Activated CD4-positive, alpha-beta T cell treated with anti-CD3 and anti-CD28 coated beads for 36 hours (primary cell): ENCODE measurements at regions of chr19 and their contacts with region 1.

Region 1: GRCh38 chr19:50511068-50511822 is at the start of gene JOSD2:
- DNase-seq: peak; percentile 99
- ATAC-seq: peak; percentile 97
- H3K4me3 Mint-ChIP-seq: peak within 1 kb of the TSS; percentile 84
- H3K27ac Mint-ChIP-seq: peak within 1 kb of the TSS; percentile 92
- H3K4me1 Mint-ChIP-seq: peaks cover 14% of the 10 kb centered on the region
- H3K27me3 Mint-ChIP-seq: peaks cover 5% of the 10 kb centered on the region
- total RNA-seq, gene JOSD2: 17.4 to 28.1 TPM

Region 2: DNA sequence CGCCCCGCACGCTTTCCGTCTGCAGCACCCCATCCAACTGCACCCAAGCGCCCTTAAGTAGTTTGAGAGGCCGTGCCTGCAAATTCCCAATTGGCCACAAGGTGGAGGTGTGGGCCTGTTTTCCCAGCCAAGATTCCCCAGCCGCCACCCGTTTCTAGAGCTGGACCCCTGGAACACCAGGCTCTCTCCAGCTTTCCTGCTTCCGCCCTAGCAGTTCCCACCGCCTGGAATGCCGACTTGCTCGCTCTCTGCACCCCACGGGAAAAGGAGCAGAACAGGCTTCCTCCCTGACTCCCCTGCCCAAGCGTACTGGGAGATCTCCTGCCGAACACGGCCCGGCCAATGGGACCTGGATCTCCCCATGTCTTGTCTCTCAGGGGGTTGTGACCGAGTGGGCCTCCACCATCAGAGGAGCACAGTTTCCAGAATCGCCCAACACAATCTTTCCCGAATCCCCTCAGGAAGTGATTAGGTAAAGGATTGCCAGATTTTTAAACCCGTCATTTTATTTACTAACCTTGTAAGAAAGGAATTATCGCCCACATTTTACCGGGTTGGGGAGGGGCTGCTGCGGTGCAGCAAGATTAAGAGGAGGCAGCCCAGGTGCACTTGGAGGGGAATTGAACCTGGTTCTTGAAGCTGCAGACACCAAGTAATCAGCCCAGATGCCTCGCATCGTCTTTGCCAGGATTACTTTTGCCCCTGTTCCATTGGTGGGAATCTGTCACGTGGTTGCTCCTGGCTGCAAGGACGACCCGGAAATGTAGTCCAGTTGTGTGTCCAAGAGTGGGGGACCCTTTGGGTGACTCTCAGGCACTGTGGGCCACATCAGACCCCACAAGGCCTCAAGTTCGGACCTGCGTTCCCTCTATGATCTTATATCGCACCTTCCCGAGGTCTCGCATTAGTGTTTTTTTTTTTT is 142.3 kb before region 1 on chr19:
- CTCF ChIA-PET with region 1: no interaction called
- POLR2A ChIA-PET with region 1: no interaction called
- intact Hi-C with region 1: loop called in 1 of 2 experiments (anchors 2 kb)
- DNase-seq: peak; percentile 87
- ATAC-seq: peak; percentile 50
- H3K4me3 Mint-ChIP-seq: peak overlapping the region; percentile 82
- H3K27ac Mint-ChIP-seq: peak overlapping the region; percentile 90
- H3K4me1 Mint-ChIP-seq: peaks cover 45% of the 10 kb centered on the region
- H3K27me3 Mint-ChIP-seq: no peaks in the 10 kb centered on the region

Region 3: GRCh38 chr19:50383852-50384684 is 127.2 kb before region 1 on chr19 and contains the start of gene POLD1:
- CTCF ChIA-PET with region 1: no interaction called
- POLR2A ChIA-PET with region 1: interaction called, 3 read pairs
- intact Hi-C with region 1: loop called (anchors 1 to 2 kb)
- DNase-seq: peak; percentile 100
- ATAC-seq: peak; percentile 92
- H3K4me3 Mint-ChIP-seq: peak within 1 kb of the TSS; percentile 99
- H3K27ac Mint-ChIP-seq: peak within 1 kb of the TSS; percentile 93
- H3K4me1 Mint-ChIP-seq: peaks cover 27% of the 10 kb centered on the region
- H3K27me3 Mint-ChIP-seq: no peaks in the 10 kb centered on the region
- total RNA-seq, gene POLD1: 220 to 227 TPM

Region 4: GRCh38 chr19:50449236-50449899 is 61.9 kb before region 1 on chr19:
- CTCF ChIA-PET with region 1: no interaction called
- POLR2A ChIA-PET with region 1: no interaction called
- intact Hi-C with region 1: no loop called
- DNase-seq: no peak
- ATAC-seq: no peak
- H3K4me3 Mint-ChIP-seq: no peak overlapping the region
- H3K27ac Mint-ChIP-seq: no peak overlapping the region
- H3K4me1 Mint-ChIP-seq: no peaks in the 10 kb centered on the region
- H3K27me3 Mint-ChIP-seq: peaks cover 3% of the 10 kb centered on the region

Region 5: GRCh38 chr19:50476224-50476942 is 34.9 kb before region 1 on chr19 and contains the starts of genes EMC10 and GARIN5A:
- CTCF ChIA-PET with region 1: no interaction called
- POLR2A ChIA-PET with region 1: no interaction called
- intact Hi-C with region 1: loop called (anchors 1 kb)
- DNase-seq: peak; percentile 98
- ATAC-seq: peak; percentile 98
- H3K4me3 Mint-ChIP-seq: peak within 1 kb of the TSS; percentile 90
- H3K27ac Mint-ChIP-seq: peak within 1 kb of the TSS; percentile 84
- H3K4me1 Mint-ChIP-seq: peaks cover 18% of the 10 kb centered on the region
- H3K27me3 Mint-ChIP-seq: no peaks in the 10 kb centered on the region
- total RNA-seq, gene EMC10: 33.4 to 34.7 TPM
- total RNA-seq, gene GARIN5A: 0.48 to 0.58 TPM

Region 6: DNA sequence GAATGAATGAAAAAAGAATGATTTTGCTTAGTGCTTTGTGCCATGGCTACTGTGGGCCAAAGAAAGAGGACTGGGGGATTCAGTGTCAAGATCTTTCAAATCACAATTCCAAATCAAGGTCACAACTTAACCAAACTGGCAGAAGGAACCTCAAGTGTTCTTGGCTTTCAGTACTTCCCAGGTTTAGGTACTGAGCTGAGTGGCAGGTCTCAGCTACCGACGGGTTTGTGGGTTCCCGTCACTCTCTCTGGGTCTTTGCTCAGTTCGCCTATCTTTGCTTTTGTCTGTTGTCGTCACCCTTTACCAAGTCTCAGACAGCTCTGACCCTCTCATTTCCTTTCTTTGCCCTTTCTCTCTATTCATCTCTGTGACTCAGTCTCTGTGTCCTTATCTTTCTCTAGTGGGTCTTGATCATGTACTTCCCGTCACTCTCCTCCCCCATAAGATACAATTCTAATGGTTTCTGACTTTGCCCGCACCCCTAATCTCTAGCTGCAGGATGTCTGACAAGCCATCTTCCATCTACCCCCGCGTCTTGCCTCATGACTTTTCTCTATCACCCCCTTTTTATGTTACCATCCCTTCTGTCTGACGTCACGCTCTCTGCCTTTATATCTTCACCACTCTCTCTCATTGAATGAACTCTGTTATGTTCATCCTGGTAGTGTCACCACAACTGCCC is 90.3 kb after region 1 on chr19:
- CTCF ChIA-PET with region 1: no interaction called
- POLR2A ChIA-PET with region 1: no interaction called
- intact Hi-C with region 1: no loop called
- DNase-seq: no peak
- ATAC-seq: no peak
- H3K4me3 Mint-ChIP-seq: no peak overlapping the region
- H3K27ac Mint-ChIP-seq: no peak overlapping the region
- H3K4me1 Mint-ChIP-seq: no peaks in the 10 kb centered on the region
- H3K27me3 Mint-ChIP-seq: peaks cover 34% of the 10 kb centered on the region

Region 7: GRCh38 chr19:50657712-50658440 is 146.6 kb after region 1 on chr19:
- CTCF ChIA-PET with region 1: no interaction called
- POLR2A ChIA-PET with region 1: no interaction called
- intact Hi-C with region 1: loop called in 1 of 2 experiments (anchors 1 kb)
- DNase-seq: peak; percentile 98
- ATAC-seq: peak; percentile 96
- H3K4me3 Mint-ChIP-seq: peak overlapping the region; percentile 76
- H3K27ac Mint-ChIP-seq: peak overlapping the region; percentile 93
- H3K4me1 Mint-ChIP-seq: peaks cover 20% of the 10 kb centered on the region
- H3K27me3 Mint-ChIP-seq: peaks cover 65% of the 10 kb centered on the region

Region 8: DNA sequence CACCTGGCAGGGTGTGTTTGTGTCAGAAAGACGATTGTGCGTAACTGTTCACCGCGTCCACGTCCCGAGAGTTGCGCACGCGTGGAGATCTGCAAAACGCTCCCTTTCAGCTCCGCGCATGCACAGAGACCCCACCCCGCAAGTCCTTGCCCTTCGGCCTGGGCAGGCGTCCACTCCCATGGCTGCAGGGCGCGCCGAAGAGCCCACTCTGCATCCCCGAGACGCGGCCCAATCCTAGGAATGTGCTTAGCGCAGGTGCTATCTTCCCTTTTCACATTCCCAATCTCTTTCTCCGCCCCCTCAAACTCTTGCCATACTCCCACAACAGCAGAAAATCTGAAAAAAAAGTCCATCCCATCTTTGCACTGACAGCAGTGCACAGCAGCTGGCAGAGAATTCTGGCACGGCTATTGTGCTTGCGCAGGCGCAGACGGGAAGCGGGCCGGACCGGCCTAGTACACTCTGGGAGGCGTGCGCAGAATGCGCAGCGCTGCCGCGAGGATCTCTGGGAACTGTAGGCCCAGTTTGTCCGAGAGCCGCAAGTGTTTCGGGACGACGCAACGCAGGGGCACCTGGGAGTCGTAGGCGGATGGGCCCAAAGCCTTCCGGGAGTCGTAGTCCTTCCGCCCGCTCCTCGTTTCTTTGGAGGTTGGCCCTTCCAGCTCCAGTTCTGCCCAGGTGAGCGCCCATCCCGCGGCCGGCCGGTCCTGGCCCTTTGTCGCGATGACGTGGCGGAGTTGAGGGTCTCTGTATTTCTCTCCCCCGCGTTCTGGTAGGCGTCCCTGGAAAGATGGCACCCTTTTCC is 1082.9 kb after region 1 on chr19:
- CTCF ChIA-PET with region 1: no interaction called
- POLR2A ChIA-PET with region 1: no interaction called
- intact Hi-C with region 1: loop called in 1 of 2 experiments (anchors 10 kb)
- DNase-seq: peak; percentile 99
- ATAC-seq: peak; percentile 100
- H3K4me3 Mint-ChIP-seq: peak overlapping the region; percentile 84
- H3K27ac Mint-ChIP-seq: peak overlapping the region; percentile 81
- H3K4me1 Mint-ChIP-seq: peaks cover 18% of the 10 kb centered on the region
- H3K27me3 Mint-ChIP-seq: peaks cover 5% of the 10 kb centered on the region